AG04450 (cell line): ENCODE measurements at regions of chr10 and their contacts with region 1.

Region 1: DNA sequence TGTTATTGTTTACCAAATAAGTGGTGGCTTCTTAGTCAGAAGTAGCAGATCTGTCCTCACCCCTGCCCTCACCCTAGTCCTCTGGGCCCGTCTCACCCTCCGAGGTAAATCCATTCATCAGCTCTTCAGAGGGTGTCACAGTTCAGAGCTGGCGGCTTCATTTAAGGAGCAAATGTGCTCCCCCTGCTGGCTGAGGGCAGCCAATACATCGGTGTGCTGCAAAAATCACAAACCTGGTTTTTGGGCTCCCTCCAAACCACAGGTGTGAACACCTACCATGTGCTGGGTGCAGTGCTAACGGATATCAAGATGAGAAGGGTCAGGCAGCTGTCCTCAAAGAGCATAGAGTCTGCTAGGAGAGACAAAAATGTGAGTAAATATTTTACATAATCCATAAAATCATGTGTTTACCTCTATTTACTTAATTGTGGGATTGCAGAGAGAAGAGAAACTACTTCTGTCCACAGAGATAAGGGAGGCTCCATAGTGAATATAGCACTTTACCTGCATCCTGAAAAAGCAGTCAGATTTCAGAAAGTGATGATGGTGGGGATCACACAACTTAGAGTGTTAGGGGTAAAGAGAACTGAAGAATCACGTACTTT is 15.5 kb upstream of the CRTAC1 start:
- DNase-seq: peak; percentile 6
- H3K4me3 ChIP-seq: no peak overlapping the region
- H3K27ac ChIP-seq: no peak overlapping the region
- H3K27me3 ChIP-seq: peaks cover 12% of the 10 kb centered on the region
- CTCF ChIP-seq: peak; percentile 92

Region 2: GRCh38 chr10:97792141-97792721 is 253.7 kb before region 1 on chr10:
- CTCF ChIA-PET with region 1: interaction called, 26 read pairs
- POLR2A ChIA-PET with region 1: no interaction called
- DNase-seq: peak; percentile 3
- H3K4me3 ChIP-seq: no peak overlapping the region
- H3K27ac ChIP-seq: no peak overlapping the region
- H3K27me3 ChIP-seq: peaks cover 13% of the 10 kb centered on the region
- CTCF ChIP-seq: peak; percentile 88

Region 3: GRCh38 chr10:97914837-97915211 is 131.1 kb before region 1 on chr10:
- CTCF ChIA-PET with region 1: interaction called, 82 read pairs
- POLR2A ChIA-PET with region 1: no interaction called
- DNase-seq: no peak
- H3K4me3 ChIP-seq: no peak overlapping the region
- H3K27ac ChIP-seq: no peak overlapping the region
- H3K27me3 ChIP-seq: peaks cover 12% of the 10 kb centered on the region
- CTCF ChIP-seq: peak; percentile 86

Region 4: GRCh38 chr10:98028168-98028770 is 17.6 kb before region 1 on chr10:
- CTCF ChIA-PET with region 1: interaction called, 22 read pairs
- POLR2A ChIA-PET with region 1: no interaction called
- DNase-seq: no peak
- H3K4me3 ChIP-seq: no peak overlapping the region
- H3K27ac ChIP-seq: no peak overlapping the region
- H3K27me3 ChIP-seq: peaks cover 48% of the 10 kb centered on the region
- CTCF ChIP-seq: peak; percentile 53

Region 5: GRCh38 chr10:98115031-98115787 is 69.3 kb after region 1 on chr10:
- CTCF ChIA-PET with region 1: no interaction called
- POLR2A ChIA-PET with region 1: no interaction called
- DNase-seq: no peak
- H3K4me3 ChIP-seq: no peak overlapping the region
- H3K27ac ChIP-seq: no peak overlapping the region
- H3K27me3 ChIP-seq: peaks cover 19% of the 10 kb centered on the region
- CTCF ChIP-seq: no peak